MCF 10A (cell line): ENCODE measurements at regions of chr3 and their contacts with region 1.

Region 1: DNA sequence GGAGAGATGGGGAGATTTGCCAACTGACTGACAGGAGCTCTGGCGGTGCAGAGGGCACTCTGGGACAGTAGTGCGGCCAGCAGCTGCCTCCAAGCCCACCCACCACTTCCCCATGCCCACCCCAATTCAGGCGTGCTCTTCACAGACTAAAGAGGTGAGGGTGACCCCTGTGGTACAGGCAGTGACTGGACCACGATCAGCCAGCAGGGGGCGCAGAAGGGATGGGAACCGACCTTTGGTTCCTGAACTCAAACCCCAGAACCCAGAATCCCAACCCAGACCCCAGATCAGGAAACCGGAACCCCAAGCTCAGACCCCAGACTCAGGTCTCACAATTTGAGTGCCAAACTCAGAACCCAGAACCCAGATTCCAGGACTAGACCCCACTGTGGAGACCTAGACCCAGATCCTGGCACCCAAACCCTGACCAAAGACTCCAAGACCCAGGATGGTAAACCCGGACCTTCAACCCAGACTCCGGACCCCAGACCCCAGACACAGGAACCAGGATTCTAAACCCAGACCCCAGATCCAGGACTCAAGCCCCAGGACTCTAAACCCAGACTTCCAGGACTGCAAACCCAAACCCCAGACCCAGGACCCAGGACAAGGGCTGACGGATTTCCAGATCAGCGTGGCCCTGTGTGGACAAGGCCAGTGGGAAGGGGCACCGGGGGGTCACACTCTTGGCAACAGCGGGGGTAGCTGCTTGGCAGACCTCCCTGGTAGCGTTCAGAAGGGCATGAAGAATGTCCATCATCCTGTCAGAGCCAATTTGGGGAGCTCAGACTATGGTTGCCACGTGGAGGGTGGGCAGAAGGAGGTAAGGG is 3.7 kb upstream of the MYL3 start:
- DNase-seq: peak; percentile 65
- H3K4me3 Mint-ChIP-seq: no peak overlapping the region
- H3K27ac Mint-ChIP-seq: no peak overlapping the region
- H3K4me1 Mint-ChIP-seq: peaks cover 11% of the 10 kb centered on the region
- H3K27me3 Mint-ChIP-seq: peaks cover 25% of the 10 kb centered on the region
- CTCF ChIP-seq: peak; percentile 81

Region 2: DNA sequence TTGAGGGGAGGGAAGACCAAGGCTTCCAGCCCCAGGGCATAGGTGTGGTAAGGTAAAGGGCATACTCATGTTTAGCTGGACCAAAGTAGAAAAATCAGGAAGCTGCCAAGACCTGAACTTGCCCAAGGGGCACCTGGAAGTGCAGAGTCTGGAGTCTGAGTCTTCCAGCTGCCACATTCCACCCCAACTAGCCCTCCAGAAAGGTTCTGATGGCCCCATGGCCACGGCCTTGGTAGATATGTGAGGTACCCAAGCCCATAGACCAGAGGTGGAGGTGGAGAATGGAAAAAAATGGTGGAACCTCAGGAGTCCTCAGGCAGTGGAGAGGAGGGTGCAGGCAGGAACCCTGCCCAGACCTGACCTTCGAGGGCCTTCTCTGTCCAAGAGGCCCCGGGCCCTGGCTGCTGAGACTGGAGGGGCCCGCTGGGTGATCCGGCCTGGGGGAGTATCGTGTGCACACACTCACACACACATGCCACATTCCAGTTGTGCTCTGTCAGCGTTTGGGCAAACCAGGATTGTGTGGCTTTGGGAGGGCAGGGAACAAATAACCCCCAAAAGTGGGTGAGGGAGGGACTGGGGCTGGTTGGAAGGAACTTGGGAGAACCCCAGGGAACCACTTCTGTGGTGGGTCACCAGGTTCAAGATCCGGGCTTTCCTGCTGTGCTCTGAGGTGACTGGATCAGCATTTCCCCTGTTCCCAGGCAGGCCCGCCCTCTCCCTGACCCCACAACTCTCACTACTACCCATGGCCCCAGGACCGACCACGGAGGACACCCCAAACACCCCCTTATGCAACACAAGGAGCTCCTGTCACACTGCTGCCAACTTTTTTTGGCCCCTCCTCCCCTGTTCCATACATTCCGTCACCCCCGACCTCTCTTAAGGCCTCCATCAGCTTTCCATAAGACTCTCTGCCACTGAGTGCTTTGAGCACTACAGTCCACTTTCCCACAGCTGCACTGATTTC is 15.3 kb before region 1 on chr3:
- CTCF ChIA-PET with region 1: interaction called, 12 read pairs
- POLR2A ChIA-PET with region 1: interaction called, 3 read pairs
- intact Hi-C with region 1: no loop called
- DNase-seq: no peak
- H3K4me3 Mint-ChIP-seq: no peak overlapping the region
- H3K27ac Mint-ChIP-seq: no peak overlapping the region
- H3K4me1 Mint-ChIP-seq: no peaks in the 10 kb centered on the region
- H3K27me3 Mint-ChIP-seq: peaks cover 23% of the 10 kb centered on the region
- CTCF ChIP-seq: no peak

Region 3: GRCh38 chr3:46878789-46879436 is 12.0 kb after region 1 on chr3:
- CTCF ChIA-PET with region 1: interaction called, 14 read pairs
- POLR2A ChIA-PET with region 1: no interaction called
- intact Hi-C with region 1: no loop called
- DNase-seq: no peak
- H3K4me3 Mint-ChIP-seq: no peak overlapping the region
- H3K27ac Mint-ChIP-seq: no peak overlapping the region
- H3K4me1 Mint-ChIP-seq: no peaks in the 10 kb centered on the region
- H3K27me3 Mint-ChIP-seq: peaks cover 22% of the 10 kb centered on the region
- CTCF ChIP-seq: no peak

Region 4: DNA sequence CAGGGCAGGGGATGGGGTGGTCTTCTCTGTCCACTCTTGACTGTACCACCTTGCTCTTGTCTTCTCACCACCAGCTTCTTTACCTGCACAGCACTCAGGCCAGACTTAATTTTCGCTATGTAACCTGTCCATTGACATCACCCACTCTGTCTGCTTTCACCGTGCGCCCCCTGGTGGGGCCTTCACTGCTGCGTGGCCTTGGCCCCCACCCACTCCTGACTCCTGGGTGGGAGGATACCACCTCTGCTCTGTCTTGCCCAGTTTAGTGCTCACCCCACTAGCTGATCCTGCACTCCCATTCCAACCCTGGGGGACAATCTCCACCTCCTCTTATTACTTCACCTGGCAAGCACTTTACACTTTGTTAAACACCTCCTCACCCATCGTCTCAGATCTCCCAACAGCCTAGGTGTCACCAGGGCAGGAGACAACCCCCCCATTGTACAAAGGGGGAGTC is 28.3 kb after region 1 on chr3:
- CTCF ChIA-PET with region 1: interaction called, 10 read pairs
- POLR2A ChIA-PET with region 1: no interaction called
- intact Hi-C with region 1: loop called (anchors 1 kb)
- DNase-seq: peak; percentile 59
- H3K4me3 Mint-ChIP-seq: no peak overlapping the region
- H3K27ac Mint-ChIP-seq: no peak overlapping the region
- H3K4me1 Mint-ChIP-seq: no peaks in the 10 kb centered on the region
- H3K27me3 Mint-ChIP-seq: peaks cover 15% of the 10 kb centered on the region
- CTCF ChIP-seq: peak; percentile 89